Naive thymus-derived CD4-positive, alpha-beta T cell (primary cell): ENCODE measurements at regions of chr3 and their contacts with region 1.

Region 1: DNA sequence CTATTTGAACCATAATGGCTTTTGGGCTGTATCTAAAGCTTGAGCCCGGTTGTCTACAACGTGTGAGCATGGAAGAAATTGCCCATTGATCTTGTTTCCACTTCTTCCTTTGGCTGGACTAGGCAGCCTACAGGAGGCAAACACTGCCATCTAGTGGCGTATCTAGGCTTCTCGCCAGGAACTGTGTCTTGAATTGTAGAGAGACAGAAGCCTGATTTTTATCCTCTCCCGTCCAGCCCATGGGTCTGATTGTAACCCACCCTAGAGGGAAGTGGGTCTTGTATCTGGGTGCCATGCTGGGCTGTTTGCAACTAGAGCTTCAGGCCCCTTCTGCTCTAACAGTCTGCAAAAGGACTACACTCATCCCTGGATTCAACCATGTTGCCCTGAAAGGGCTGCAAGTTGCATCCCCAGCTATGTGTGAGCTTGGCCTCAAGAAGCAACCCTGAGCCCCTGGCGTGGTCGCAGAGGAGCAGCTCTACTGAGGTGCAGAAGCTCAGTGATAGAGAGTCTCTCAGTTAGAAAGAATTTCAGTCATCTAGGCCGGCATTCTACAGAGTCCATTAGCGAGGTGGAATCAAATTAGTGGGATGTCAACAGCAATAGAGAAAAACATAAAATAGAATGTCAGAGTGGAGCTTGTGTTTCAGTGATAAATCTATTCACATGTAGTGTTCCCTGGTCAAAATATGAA is 170.2 kb upstream of the UMPS start:
- DNase-seq: peak in 6 of 9 donors; percentile 31 to 46 (median 36)
- ATAC-seq: peak; percentile 79
- H3K4me3 ChIP-seq: no peak overlapping the region
- H3K4me3 Mint-ChIP-seq: no peak overlapping the region
- H3K27ac ChIP-seq: no peak overlapping the region
- H3K27ac Mint-ChIP-seq: no peak overlapping the region
- H3K4me1 ChIP-seq: no peaks in the 10 kb centered on the region
- H3K4me1 Mint-ChIP-seq: peaks cover 0 to 2% (median 0%) of the 10 kb centered on the region in 7 donors
- H3K27me3 ChIP-seq: no peaks in the 10 kb centered on the region
- H3K27me3 Mint-ChIP-seq: peaks cover 30 to 64% (median 39%) of the 10 kb centered on the region in 5 donors

Region 2: GRCh38 chr3:123941121-123941520 is 618.9 kb before region 1 on chr3:
- CTCF ChIA-PET with region 1: no interaction called
- POLR2A ChIA-PET with region 1: no interaction called
- intact Hi-C with region 1: loop called in 1 of 2 experiments (anchors 10 kb)
- DNase-seq: no peak
- ATAC-seq: no peak
- H3K4me3 ChIP-seq: no peak overlapping the region
- H3K4me3 Mint-ChIP-seq: no peak overlapping the region
- H3K27ac ChIP-seq: no peak overlapping the region
- H3K27ac Mint-ChIP-seq: no peak overlapping the region
- H3K4me1 ChIP-seq: no peaks in the 10 kb centered on the region
- H3K4me1 Mint-ChIP-seq: no peaks in the 10 kb centered on the region
- H3K27me3 ChIP-seq: no peaks in the 10 kb centered on the region
- H3K27me3 Mint-ChIP-seq: no peaks in the 10 kb centered on the region

Region 3: GRCh38 chr3:124584552-124585391 is 24.7 kb after region 1 on chr3:
- CTCF ChIA-PET with region 1: interaction called, 5 read pairs
- POLR2A ChIA-PET with region 1: no interaction called
- intact Hi-C with region 1: loop called in 1 of 2 experiments (anchors 1 kb)
- DNase-seq: peak in 6 of 9 donors; percentile 3 to 19 (median 11)
- ATAC-seq: peak; percentile 65
- H3K4me3 ChIP-seq: peak overlapping the region; percentile 63
- H3K4me3 Mint-ChIP-seq: peak overlapping the region; percentile 66 to 92 (median 82)
- H3K27ac ChIP-seq: no peak overlapping the region
- H3K27ac Mint-ChIP-seq: peak overlapping the region in 7 of 9 donors; percentile 8 to 75 (median 56)
- H3K4me1 ChIP-seq: peaks cover 0 to 23% of the 10 kb centered on the region in 2 donors
- H3K4me1 Mint-ChIP-seq: peaks cover 12 to 44% (median 23%) of the 10 kb centered on the region in 7 donors
- H3K27me3 ChIP-seq: no peaks in the 10 kb centered on the region
- H3K27me3 Mint-ChIP-seq: peaks cover 0 to 74% (median 45%) of the 10 kb centered on the region in 5 donors

Region 4: GRCh38 chr3:124599779-124600609 is 40.0 kb after region 1 on chr3:
- CTCF ChIA-PET with region 1: no interaction called
- POLR2A ChIA-PET with region 1: no interaction called
- intact Hi-C with region 1: no loop called
- DNase-seq: no peak
- ATAC-seq: no peak
- H3K4me3 ChIP-seq: no peak overlapping the region
- H3K4me3 Mint-ChIP-seq: no peak overlapping the region
- H3K27ac ChIP-seq: no peak overlapping the region
- H3K27ac Mint-ChIP-seq: no peak overlapping the region
- H3K4me1 ChIP-seq: no peaks in the 10 kb centered on the region
- H3K4me1 Mint-ChIP-seq: peaks cover 0 to 12% (median 0%) of the 10 kb centered on the region in 7 donors
- H3K27me3 ChIP-seq: no peaks in the 10 kb centered on the region
- H3K27me3 Mint-ChIP-seq: peaks cover 0 to 33% (median 7%) of the 10 kb centered on the region in 5 donors

Region 5: DNA sequence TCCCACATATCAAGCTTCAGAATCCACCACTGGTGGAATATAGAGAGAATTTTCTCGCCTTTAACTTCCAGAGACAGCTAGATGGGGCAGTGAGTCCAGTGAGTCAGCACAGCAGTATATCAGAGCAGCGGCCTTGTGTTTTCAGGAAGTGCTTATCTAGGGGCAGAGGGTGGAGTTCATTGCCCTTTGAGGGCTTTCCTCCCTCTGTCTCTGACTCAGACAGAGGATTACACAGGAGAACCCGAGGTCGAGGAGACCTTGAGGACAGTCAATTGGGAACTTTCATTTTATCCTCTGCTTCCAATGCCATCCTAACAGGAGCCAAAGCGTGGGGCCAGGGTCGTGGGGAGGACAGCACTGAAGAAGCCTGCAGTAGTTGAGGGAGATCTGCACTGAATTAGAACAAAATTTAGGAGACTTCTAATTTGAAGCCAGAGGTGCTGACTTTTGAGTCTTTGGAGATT is 60.6 kb after region 1 on chr3:
- CTCF ChIA-PET with region 1: interaction called, 4 read pairs
- POLR2A ChIA-PET with region 1: no interaction called
- intact Hi-C with region 1: loop called in 1 of 2 experiments (anchors 1 kb)
- DNase-seq: peak in 1 of 9 donors; percentile 28
- ATAC-seq: peak; percentile 92
- H3K4me3 ChIP-seq: no peak overlapping the region
- H3K4me3 Mint-ChIP-seq: peak overlapping the region in 8 of 10 donors; percentile 13 to 69 (median 54)
- H3K27ac ChIP-seq: no peak overlapping the region
- H3K27ac Mint-ChIP-seq: peak overlapping the region in 5 of 9 donors; percentile 65 to 85 (median 75)
- H3K4me1 ChIP-seq: peaks cover 0 to 11% of the 10 kb centered on the region in 2 donors
- H3K4me1 Mint-ChIP-seq: peaks cover 11 to 30% (median 21%) of the 10 kb centered on the region in 7 donors
- H3K27me3 ChIP-seq: no peaks in the 10 kb centered on the region
- H3K27me3 Mint-ChIP-seq: peaks cover 0 to 14% (median 0%) of the 10 kb centered on the region in 5 donors

Region 6: DNA sequence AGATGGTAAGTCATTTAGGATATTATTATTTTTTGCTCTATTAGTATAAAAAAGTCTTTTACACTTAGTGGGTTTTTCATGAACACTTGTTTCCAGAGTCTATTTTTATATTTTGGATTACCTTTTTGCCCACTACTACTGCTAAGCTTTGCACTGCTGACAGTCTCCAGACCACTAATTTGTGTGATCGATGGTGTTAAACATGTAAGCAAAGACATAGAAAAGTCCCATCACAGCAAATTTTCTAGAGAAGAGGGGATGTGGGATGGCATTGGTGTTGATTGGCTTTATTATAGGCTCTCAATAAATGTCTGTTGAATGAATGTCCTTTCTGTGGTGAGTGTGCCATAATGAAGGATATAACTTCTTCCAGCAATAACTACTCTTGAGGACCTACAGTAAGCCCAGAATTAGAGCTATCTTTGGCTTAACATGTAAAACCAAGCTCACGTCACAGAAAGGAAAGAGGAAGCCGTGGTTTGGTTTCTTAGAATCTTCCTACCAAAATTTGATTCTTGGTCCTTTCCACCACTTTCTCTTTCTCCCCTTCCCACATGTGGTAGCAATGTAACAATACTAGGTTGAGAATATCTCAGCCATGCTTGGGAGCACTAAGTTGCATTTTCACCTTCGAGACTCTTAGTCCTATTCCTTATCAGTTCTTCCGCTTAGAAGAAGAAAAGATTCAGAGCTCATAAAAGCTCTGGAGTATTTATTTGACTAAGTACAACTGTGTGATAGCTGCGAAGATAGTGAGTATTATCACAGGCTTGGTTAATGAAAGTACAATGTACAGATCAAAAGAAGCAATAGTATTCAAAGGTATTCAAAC is 79.6 kb after region 1 on chr3:
- CTCF ChIA-PET with region 1: no interaction called
- POLR2A ChIA-PET with region 1: no interaction called
- intact Hi-C with region 1: loop called in 1 of 2 experiments (anchors 5 kb)
- DNase-seq: peak in 1 of 9 donors; percentile 3
- ATAC-seq: peak; percentile 78
- H3K4me3 ChIP-seq: no peak overlapping the region
- H3K4me3 Mint-ChIP-seq: peak overlapping the region in 8 of 10 donors; percentile 44 to 76 (median 59)
- H3K27ac ChIP-seq: peak overlapping the region; percentile 29
- H3K27ac Mint-ChIP-seq: peak overlapping the region in 6 of 9 donors; percentile 32 to 88 (median 50)
- H3K4me1 ChIP-seq: peaks cover 0 to 9% of the 10 kb centered on the region in 2 donors
- H3K4me1 Mint-ChIP-seq: peaks cover 5 to 50% (median 12%) of the 10 kb centered on the region in 7 donors
- H3K27me3 ChIP-seq: no peaks in the 10 kb centered on the region
- H3K27me3 Mint-ChIP-seq: peaks cover 0 to 66% (median 0%) of the 10 kb centered on the region in 5 donors

Region 7: GRCh38 chr3:124688581-124689454 is 128.8 kb after region 1 on chr3:
- CTCF ChIA-PET with region 1: interaction called, 26 read pairs
- POLR2A ChIA-PET with region 1: no interaction called
- intact Hi-C with region 1: loop called (anchors 1 kb)
- DNase-seq: peak; percentile 26 to 69 (median 49)
- ATAC-seq: peak; percentile 90
- H3K4me3 ChIP-seq: no peak overlapping the region
- H3K4me3 Mint-ChIP-seq: no peak overlapping the region
- H3K27ac ChIP-seq: no peak overlapping the region
- H3K27ac Mint-ChIP-seq: no peak overlapping the region
- H3K4me1 ChIP-seq: no peaks in the 10 kb centered on the region
- H3K4me1 Mint-ChIP-seq: peaks cover 0 to 7% (median 2%) of the 10 kb centered on the region in 7 donors
- H3K27me3 ChIP-seq: peaks cover 0 to 4% of the 10 kb centered on the region in 2 donors
- H3K27me3 Mint-ChIP-seq: peaks cover 0 to 56% (median 18%) of the 10 kb centered on the region in 5 donors

Region 8: DNA sequence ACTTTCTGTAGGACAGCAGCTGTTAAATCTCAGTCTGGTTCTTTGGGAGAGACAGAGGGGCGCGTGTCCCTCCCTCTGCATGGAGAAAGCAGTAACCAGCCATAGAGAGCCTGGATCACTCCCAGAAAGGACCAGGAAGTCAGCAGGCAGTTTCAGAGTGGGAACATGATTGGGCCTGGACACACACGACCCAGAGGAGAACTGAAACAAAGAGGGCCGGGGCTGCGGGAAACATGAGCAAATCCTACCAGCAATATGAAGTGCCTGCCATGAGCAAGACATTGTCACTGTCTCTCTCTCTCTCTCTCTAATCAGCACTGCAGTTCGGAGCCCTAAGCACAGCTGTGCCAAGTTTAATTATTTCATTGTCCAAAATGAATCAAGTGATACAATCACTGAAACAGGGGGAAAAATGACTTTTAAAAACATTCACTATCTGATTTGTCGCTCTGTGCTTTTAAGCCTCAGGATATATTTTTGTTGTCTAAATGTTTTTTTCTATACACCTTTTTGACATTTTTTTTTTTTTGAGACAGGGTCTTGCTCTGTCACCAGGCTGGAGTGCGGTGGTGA is 356.9 kb after region 1 on chr3:
- CTCF ChIA-PET with region 1: no interaction called
- POLR2A ChIA-PET with region 1: no interaction called
- intact Hi-C with region 1: no loop called
- DNase-seq: no peak
- ATAC-seq: peak; percentile 20
- H3K4me3 ChIP-seq: no peak overlapping the region
- H3K4me3 Mint-ChIP-seq: no peak overlapping the region
- H3K27ac ChIP-seq: no peak overlapping the region
- H3K27ac Mint-ChIP-seq: no peak overlapping the region
- H3K4me1 ChIP-seq: no peaks in the 10 kb centered on the region
- H3K4me1 Mint-ChIP-seq: no peaks in the 10 kb centered on the region
- H3K27me3 ChIP-seq: no peaks in the 10 kb centered on the region
- H3K27me3 Mint-ChIP-seq: peaks cover 4 to 37% (median 9%) of the 10 kb centered on the region in 5 donors